Caco-2 (cell line): ENCODE measurements at regions of chr14 and their contacts with region 1.

Region 1: DNA sequence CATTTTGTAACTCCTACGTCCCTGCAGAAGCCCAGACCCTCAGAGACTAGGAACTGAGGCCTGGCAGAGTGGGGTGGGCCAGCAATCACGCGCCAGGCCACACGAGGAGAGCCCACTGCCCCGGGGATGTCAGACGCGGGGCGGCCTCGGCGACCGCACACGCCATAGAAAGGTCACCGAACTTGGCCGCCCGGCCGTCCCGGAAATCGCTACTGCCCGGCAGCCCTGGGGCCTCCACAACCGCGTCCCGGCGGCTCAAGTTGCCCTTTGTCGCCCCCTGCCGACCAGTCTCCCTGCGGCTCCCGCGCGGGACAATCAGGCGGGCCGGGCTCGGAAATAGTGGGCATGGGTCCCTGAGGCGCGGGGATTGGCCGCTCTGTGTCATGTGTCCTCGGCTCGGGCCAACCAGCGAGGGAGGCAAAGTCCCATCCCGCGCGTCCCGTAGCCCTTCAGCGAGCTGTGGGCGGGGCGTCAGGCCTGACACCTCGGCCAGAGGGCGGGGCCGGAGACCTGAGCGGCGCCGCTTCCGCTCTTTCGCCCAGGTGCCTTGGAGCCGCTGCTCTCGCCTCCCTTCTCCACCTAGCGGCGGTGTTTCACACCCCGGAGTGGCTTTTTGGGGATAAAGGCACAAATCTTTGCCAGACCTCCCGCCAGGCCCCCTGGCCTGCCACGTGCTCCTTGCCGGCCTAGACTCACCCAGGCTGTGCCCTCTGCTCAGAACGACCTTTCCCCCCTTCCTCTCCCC is 33.4 kb upstream of the DEGS2 start:
- DNase-seq: peak; percentile 99
- H3K4me3 ChIP-seq: peak overlapping the region; percentile 36
- H3K4me3 Mint-ChIP-seq: peak overlapping the region; percentile 71
- H3K27ac Mint-ChIP-seq: peak overlapping the region; percentile 86
- H3K4me1 ChIP-seq: peaks cover 10% of the 10 kb centered on the region
- H3K4me1 Mint-ChIP-seq: peaks cover 6% of the 10 kb centered on the region
- H3K27me3 ChIP-seq: no peaks in the 10 kb centered on the region
- H3K27me3 Mint-ChIP-seq: no peaks in the 10 kb centered on the region
- CTCF ChIP-seq: peak; percentile 72 to 82

Region 2: DNA sequence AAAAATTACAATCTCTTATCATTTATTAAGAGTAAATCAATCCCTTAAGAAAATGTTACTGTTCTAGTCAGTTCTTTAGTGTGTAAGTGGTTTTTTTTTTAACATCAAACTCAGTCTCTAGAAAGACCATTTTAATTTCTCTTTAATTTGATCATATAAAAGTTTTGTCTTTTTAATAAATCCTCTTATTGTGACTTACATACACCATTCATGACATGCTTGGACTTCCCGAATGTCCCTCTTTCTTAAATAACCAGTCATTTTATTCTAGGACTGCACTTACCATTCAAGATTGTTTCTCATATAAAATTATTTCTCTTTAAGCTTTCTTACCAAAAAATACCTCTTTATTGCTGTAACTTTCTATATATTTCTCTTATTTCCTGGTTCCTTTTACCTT is 188.5 kb before region 1 on chr14:
- CTCF ChIA-PET with region 1: no interaction called
- POLR2A ChIA-PET with region 1: no interaction called
- intact Hi-C with region 1: no loop called
- DNase-seq: no peak
- H3K4me3 ChIP-seq: no peak overlapping the region
- H3K4me3 Mint-ChIP-seq: no peak overlapping the region
- H3K27ac Mint-ChIP-seq: no peak overlapping the region
- H3K4me1 ChIP-seq: peaks cover 1% of the 10 kb centered on the region
- H3K4me1 Mint-ChIP-seq: peaks cover 5% of the 10 kb centered on the region
- H3K27me3 ChIP-seq: no peaks in the 10 kb centered on the region
- H3K27me3 Mint-ChIP-seq: no peaks in the 10 kb centered on the region
- CTCF ChIP-seq: no peak

Region 3: GRCh38 chr14:100056964-100057795 is 135.7 kb before region 1 on chr14:
- CTCF ChIA-PET with region 1: no interaction called
- POLR2A ChIA-PET with region 1: no interaction called
- intact Hi-C with region 1: loop called (anchors 5 kb)
- DNase-seq: peak in 1 of 2 experiments; percentile 15
- H3K4me3 ChIP-seq: no peak overlapping the region
- H3K4me3 Mint-ChIP-seq: no peak overlapping the region
- H3K27ac Mint-ChIP-seq: no peak overlapping the region
- H3K4me1 ChIP-seq: no peaks in the 10 kb centered on the region
- H3K4me1 Mint-ChIP-seq: no peaks in the 10 kb centered on the region
- H3K27me3 ChIP-seq: no peaks in the 10 kb centered on the region
- H3K27me3 Mint-ChIP-seq: peaks cover 2% of the 10 kb centered on the region
- CTCF ChIP-seq: peak; percentile 21 to 34

Region 4: DNA sequence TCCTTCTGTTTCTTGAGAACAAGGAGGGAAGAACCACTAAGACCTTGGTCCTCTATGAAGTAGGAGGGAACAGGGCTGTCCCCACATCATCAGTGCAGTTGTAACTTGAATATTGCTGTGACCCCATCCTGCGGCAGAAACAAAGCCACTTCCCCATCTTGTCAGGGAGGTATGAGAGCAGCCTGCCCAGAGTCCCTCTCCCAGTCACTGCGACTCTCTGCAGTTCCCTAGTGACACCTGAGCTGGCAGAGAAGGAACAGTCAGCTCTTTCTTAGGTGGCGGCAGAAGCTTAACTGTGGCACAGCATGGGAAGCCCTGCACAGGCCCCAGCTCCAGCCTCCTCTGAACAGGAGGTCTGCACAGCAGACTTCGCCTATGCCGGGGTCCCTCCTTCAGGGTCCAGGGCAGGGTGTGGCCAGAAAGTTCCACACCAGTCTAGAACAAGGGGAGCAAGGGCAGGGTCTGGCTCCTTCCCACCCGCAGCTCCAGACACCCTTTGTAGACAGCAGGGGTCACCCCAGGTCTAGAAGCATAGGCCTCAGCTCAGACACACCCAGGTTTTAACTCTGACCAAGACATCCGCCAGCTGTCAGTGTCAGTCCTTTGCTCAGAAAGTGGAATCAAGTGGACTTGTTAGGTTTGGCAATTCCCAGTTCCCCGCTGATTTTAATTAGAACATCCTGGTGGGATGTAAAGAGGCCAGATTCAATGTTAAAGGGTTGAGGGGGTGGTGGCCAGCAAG is 70.2 kb before region 1 on chr14:
- CTCF ChIA-PET with region 1: interaction called, 27 read pairs
- POLR2A ChIA-PET with region 1: no interaction called
- intact Hi-C with region 1: loop called (anchors 1 kb)
- DNase-seq: peak in 1 of 2 experiments; percentile 52
- H3K4me3 ChIP-seq: no peak overlapping the region
- H3K4me3 Mint-ChIP-seq: no peak overlapping the region
- H3K27ac Mint-ChIP-seq: no peak overlapping the region
- H3K4me1 ChIP-seq: no peaks in the 10 kb centered on the region
- H3K4me1 Mint-ChIP-seq: peaks cover 5% of the 10 kb centered on the region
- H3K27me3 ChIP-seq: no peaks in the 10 kb centered on the region
- H3K27me3 Mint-ChIP-seq: no peaks in the 10 kb centered on the region
- CTCF ChIP-seq: peak; percentile 30 to 75

Region 5: DNA sequence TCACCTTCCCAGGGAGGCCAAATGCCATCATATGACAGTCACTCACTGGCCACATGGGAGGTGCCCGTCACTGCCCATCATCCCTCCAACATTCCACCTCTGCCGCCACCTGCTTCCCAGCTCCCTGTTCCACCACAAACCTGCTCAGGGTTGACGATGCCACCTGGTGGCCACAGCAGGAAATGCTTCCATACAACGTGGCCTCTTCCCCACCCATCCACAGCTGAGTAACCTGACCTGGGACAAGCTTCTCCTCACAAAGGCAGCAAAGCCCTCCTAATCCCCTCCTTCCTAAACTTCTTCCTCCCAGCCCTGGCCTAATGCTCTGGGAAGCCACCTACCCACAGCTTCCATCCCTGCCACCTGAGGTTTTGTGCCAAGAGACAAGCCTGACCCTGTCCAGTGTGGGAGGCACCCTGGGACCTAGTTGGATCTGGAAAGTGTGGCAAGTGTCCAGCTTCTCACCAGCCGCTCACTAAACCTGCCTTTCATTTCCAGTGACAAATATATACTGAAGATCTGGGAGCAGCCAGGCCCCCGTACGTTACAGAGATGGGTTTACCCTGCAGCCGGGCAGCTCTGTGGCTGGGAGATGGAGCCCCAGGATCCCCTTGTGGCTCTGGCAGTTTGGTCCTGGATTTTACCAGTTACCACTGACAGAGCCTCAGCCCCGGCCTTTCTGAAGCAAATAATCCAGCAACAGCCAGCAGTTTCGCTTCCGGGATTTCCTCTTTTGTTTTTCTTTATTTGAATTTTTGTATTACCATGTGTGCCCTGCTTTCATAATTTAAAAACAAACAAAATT is 37.6 kb before region 1 on chr14:
- CTCF ChIA-PET with region 1: interaction called, 12 read pairs
- POLR2A ChIA-PET with region 1: no interaction called
- intact Hi-C with region 1: no loop called
- DNase-seq: peak in 1 of 2 experiments; percentile 55
- H3K4me3 ChIP-seq: no peak overlapping the region
- H3K4me3 Mint-ChIP-seq: no peak overlapping the region
- H3K27ac Mint-ChIP-seq: no peak overlapping the region
- H3K4me1 ChIP-seq: peaks cover 13% of the 10 kb centered on the region; the same call in 1 of the 2 replicates
- H3K4me1 Mint-ChIP-seq: no peaks in the 10 kb centered on the region
- H3K27me3 ChIP-seq: no peaks in the 10 kb centered on the region; the same call in 1 of the 2 replicates
- H3K27me3 Mint-ChIP-seq: no peaks in the 10 kb centered on the region
- CTCF ChIP-seq: peak; percentile 61 to 64

Region 6: DNA sequence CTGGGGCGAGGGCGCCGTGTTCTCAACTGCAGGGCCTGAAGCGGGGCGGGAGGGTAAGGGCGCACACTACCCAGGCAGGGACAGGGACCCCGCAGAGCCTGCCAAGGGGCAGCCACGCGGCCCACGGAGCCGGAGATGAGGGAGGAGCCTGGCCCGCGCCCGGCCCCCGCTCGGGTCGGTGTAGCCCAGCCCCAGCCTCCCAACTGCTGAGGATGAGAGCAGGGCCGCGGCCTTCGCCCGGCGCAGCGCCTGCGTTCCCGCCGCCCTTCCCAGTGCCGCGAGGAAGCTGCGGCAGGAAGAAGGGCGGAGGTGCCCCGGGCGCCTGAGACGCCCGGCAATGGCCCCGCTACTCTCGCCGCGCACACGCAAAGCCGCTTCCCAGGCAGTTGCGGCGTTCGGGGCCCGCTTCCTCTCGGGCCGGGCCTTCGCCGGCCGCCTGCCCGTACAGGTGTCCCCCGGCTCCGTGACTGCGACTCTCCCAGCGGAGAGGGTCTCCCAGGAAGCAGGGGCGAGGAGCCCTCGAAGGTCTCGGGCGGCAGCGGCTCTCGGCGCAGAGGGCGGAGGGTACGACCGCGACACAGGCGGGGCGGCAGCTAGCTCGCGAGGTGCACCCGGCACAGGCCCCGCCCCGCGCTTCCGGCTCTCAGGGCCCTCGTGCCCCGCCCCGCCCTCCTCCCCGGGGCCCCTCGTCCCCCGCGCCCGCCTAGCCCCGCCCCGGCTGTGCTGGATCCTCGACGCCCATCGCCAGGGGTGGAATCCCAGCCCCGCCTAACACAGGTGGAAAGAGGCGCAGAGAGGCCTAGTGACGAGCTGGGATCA is 21.3 kb after region 1 on chr14:
- CTCF ChIA-PET with region 1: interaction called, 16 read pairs
- POLR2A ChIA-PET with region 1: interaction called, 11 read pairs
- intact Hi-C with region 1: loop called (anchors 2 kb)
- DNase-seq: peak; percentile 95 to 96
- H3K4me3 ChIP-seq: peak overlapping the region; percentile 89
- H3K4me3 Mint-ChIP-seq: peak overlapping the region; percentile 62
- H3K27ac Mint-ChIP-seq: peak overlapping the region; percentile 90
- H3K4me1 ChIP-seq: peaks cover 21% of the 10 kb centered on the region
- H3K4me1 Mint-ChIP-seq: peaks cover 8% of the 10 kb centered on the region
- H3K27me3 ChIP-seq: no peaks in the 10 kb centered on the region
- H3K27me3 Mint-ChIP-seq: no peaks in the 10 kb centered on the region
- CTCF ChIP-seq: no peak

Region 7: DNA sequence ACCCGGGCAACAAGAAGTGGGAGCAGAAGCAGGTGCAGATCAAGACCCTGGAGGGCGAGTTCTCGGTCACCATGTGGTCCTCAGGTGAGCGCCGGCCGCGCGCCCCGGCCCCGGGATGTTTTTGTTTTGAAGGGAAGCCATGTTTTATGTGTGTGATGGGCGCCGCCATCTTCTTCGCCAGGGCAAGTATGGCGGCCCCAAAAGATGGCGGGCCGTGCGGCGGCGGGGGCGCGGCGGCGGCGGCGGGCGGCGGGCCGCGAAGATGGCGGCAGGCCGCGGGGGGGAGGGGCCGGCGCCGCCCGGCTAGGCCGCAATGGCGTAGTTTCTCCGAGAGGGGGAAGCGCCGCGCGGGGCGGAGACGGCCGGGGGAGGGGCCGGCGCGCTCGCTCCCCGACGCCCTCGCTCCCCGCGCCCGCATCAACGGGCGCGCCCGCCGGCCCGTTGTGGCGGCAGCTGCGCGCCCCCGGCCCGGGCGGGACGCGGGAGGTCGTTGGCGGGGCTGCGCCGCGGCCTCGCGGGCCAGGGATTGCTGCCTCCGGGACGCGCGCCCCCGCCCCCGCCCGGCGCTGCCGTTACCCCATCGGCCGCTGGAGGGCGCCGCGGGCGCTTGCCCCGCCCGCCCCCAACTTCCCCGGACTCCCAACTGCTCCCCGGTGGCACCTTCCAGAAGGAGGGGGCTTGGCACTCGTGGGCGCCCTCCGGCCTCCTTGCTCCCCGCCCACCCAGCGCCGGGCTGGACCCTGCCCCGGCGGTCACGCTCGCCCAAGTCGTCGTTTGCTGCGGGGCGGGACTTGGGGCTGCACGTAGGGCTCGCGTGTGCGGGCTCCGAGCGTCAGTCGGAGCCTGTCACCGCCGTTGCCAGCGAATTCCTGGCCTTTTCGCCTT is 47.2 kb after region 1 on chr14:
- CTCF ChIA-PET with region 1: interaction called, 10 read pairs
- POLR2A ChIA-PET with region 1: interaction called, 3 read pairs
- intact Hi-C with region 1: loop called (anchors 1 kb)
- DNase-seq: peak; percentile 90 to 91
- H3K4me3 ChIP-seq: peak overlapping the region; percentile 100
- H3K4me3 Mint-ChIP-seq: peak overlapping the region; percentile 84
- H3K27ac Mint-ChIP-seq: peak overlapping the region; percentile 91
- H3K4me1 ChIP-seq: peaks cover 7% of the 10 kb centered on the region; the same call in 1 of the 2 replicates
- H3K4me1 Mint-ChIP-seq: peaks cover 9% of the 10 kb centered on the region
- H3K27me3 ChIP-seq: no peaks in the 10 kb centered on the region
- H3K27me3 Mint-ChIP-seq: no peaks in the 10 kb centered on the region
- CTCF ChIP-seq: peak; percentile 55 to 68

Region 8: GRCh38 chr14:100375963-100376735 is 183.3 kb after region 1 on chr14:
- CTCF ChIA-PET with region 1: no interaction called
- POLR2A ChIA-PET with region 1: no interaction called
- intact Hi-C with region 1: loop called (anchors 5 kb)
- DNase-seq: peak; percentile 92 to 96
- H3K4me3 ChIP-seq: peak within 1 kb of the TSS; percentile 90
- H3K4me3 Mint-ChIP-seq: peak within 1 kb of the TSS; percentile 83
- H3K27ac Mint-ChIP-seq: peak within 1 kb of the TSS; percentile 77
- H3K4me1 ChIP-seq: no peaks in the 10 kb centered on the region
- H3K4me1 Mint-ChIP-seq: peaks cover 22% of the 10 kb centered on the region
- H3K27me3 ChIP-seq: no peaks in the 10 kb centered on the region
- H3K27me3 Mint-ChIP-seq: no peaks in the 10 kb centered on the region
- CTCF ChIP-seq: no peak